Ovary (tissue), 10 donors: ENCODE measurements at regions of chr4 and their contacts with region 1.

Region 1: DNA sequence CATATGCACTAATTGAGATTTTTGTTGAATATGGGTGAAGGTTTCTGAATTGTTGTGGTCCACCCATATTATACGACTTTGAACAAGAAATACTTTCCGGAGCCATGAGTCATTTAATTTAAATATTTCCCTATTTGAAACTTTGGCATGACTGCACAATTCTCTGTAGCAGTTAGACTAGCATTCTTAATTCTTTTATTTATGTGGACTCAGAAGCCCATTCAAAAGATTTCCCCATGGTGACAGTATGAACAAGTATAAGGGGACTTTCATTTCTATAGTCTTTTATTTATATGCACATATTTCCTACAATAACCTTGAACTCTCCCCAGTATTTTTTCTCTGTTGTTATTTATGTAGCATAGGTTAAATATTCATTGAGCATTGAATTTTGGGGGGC is 72.6 kb downstream of the DTHD1 start:
- DNase-seq: no peak
- H3K4me3 ChIP-seq: no peak overlapping the region
- H3K27ac ChIP-seq: no peak overlapping the region
- H3K4me1 ChIP-seq: no peaks in the 10 kb centered on the region
- H3K27me3 ChIP-seq: no peaks in the 10 kb centered on the region
- CTCF ChIP-seq: no peak
- EP300 ChIP-seq: no peak
- POLR2A ChIP-seq: no peak

Region 2: DNA sequence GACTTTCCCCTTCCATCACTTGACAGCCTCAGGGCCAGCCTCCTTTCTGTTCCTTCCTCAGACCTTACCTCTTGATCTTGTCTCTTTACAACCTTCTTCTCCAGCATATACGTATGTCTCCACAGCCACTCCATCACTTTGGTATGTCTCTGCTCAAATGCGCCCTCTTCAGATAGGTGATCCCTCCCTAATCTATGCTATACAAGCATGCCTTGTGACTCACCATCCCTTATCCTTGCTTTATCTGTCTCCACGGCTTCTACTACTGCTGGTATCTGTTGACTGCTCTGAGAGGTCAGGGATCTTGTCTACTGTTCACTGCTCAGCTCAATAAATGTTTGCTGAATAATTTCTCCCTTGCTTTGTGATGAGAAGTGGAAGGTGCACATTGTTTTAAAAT is 118.7 kb before region 1 on chr4:
- intact Hi-C with region 1: no loop called
- DNase-seq: no peak
- H3K4me3 ChIP-seq: no peak overlapping the region
- H3K27ac ChIP-seq: no peak overlapping the region
- H3K4me1 ChIP-seq: no peaks in the 10 kb centered on the region
- H3K27me3 ChIP-seq: no peaks in the 10 kb centered on the region
- CTCF ChIP-seq: no peak
- EP300 ChIP-seq: no peak
- POLR2A ChIP-seq: no peak

Region 3: DNA sequence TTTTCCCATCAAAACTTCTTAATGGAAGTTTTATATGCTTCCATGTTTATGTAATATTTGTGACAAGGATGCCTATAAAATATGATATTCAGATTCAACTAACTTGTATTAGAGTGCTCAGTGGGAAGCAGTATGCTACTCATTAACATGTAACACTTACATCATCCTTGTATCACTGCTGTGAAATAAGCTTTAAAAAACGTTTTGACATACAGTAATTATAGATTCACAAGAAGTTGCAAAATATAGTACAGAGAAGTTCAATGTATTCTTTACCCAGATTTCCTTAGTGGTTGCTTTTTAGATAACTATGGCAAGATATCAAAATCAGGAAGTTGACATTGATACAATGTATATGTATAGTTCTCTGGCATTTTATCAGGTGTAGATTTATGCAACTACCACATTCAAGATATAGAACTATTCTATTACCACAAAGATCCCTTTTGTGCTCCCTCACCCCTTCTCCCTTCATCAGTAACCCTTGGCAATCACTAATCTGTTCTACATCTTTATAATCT is 16.3 kb before region 1 on chr4:
- intact Hi-C with region 1: loop called in 1 of 4 experiments (anchors 2 kb)
- DNase-seq: no peak
- H3K4me3 ChIP-seq: no peak overlapping the region
- H3K27ac ChIP-seq: no peak overlapping the region
- H3K4me1 ChIP-seq: no peaks in the 10 kb centered on the region
- H3K27me3 ChIP-seq: no peaks in the 10 kb centered on the region
- CTCF ChIP-seq: no peak
- EP300 ChIP-seq: no peak
- POLR2A ChIP-seq: no peak

Region 4: DNA sequence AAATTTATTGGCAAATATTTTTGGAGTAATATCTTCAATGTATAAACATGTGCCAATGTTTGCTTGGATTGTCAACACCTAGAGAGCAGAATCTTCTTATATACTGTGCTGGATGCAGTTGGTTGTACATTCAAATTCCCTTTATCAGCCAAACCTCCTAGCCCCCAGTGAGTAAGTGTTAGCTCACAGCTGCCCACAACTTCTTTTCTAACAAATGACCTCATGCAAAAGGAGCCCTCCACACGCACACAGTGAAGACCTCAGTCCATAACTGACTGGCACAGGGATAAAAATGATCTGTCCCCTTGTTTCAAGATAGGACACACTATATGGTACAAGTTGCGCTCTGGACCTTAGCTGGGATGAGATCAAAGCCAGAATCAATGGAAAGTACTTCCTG is 432.5 kb after region 1 on chr4:
- intact Hi-C with region 1: no loop called
- DNase-seq: no peak
- H3K4me3 ChIP-seq: no peak overlapping the region
- H3K27ac ChIP-seq: no peak overlapping the region
- H3K4me1 ChIP-seq: no peaks in the 10 kb centered on the region
- H3K27me3 ChIP-seq: no peaks in the 10 kb centered on the region
- CTCF ChIP-seq: no peak
- EP300 ChIP-seq: no peak
- POLR2A ChIP-seq: no peak